CD8-positive, alpha-beta T cell (primary cell): ENCODE measurements at regions of chr2 and their contacts with region 1.

Region 1: DNA sequence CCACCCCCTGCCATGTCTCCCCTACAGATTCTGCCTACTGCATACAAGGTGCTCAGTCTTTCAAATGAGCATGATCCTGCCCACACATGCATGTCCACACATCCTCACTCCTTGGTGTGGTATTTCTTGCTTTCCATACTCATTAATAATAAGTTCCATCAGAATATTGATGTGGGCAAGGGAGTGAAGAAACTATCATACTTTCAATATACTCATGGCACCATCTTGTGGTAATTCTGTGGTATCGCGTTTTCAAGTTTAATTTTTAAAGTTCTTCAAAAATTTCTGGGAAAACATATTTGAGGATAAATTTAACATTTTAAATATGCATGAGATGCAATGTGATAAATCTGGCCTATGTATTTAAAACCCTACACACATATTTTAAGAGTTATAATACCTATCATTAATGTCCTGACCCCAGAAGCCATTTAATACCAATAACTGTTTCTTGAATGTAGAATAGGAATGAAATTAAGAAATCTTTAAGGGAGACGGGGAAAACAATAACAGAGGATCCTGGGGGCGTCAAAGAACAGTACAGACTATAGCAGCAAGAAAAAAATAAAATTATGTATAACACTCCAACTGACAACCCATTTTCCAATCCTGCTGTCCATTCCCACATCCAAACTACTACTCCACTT is 110.1 kb downstream of the ZNF385B start:
- DNase-seq: peak in 1 of 9 experiments; percentile 7
- ATAC-seq: no peak
- H3K4me3 ChIP-seq: no peak overlapping the region
- H3K4me3 Mint-ChIP-seq: no peak overlapping the region
- H3K27ac ChIP-seq: no peak overlapping the region
- H3K27ac Mint-ChIP-seq: no peak overlapping the region
- H3K4me1 ChIP-seq: no peaks in the 10 kb centered on the region
- H3K4me1 Mint-ChIP-seq: no peaks in the 10 kb centered on the region
- H3K27me3 ChIP-seq: no peaks in the 10 kb centered on the region
- H3K27me3 Mint-ChIP-seq: no peaks in the 10 kb centered on the region
- CTCF ChIP-seq: peak; percentile 42

Region 2: DNA sequence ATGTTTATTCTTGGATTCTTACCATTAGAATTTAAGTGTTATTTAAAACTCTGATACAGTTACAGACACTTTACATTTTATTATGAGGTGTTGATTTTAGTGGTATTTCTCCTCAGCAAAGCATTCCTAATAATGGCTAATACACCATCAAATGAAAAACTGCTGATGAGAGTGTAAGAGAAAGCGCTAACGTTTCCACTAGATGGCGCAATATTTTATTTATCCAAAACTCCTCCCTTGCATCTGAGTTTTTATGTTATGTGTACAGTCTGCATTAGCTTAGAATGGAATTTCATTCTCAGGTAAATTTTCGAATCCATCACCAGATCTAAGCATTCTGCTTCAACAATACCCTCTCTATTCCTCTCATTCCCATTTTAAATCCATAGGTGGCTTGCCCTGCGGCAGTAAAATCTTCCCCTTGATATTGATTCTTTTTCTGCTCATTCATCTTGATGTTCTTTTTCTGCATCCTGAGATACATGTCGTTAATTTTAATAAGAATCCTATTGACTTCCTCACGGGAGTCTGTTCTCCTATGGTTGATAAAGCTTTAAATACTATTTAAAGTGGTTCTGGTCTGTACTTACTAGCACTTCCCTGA is 1354.2 kb before region 1 on chr2:
- CTCF ChIA-PET with region 1: no interaction called
- POLR2A ChIA-PET with region 1: no interaction called
- intact Hi-C with region 1: loop called in 1 of 2 experiments (anchors 5 kb)
- DNase-seq: peak in 2 of 9 experiments; percentile 55 to 67
- ATAC-seq: peak; percentile 62
- H3K4me3 ChIP-seq: no peak overlapping the region
- H3K4me3 Mint-ChIP-seq: no peak overlapping the region
- H3K27ac ChIP-seq: no peak overlapping the region
- H3K27ac Mint-ChIP-seq: no peak overlapping the region
- H3K4me1 ChIP-seq: no peaks in the 10 kb centered on the region
- H3K4me1 Mint-ChIP-seq: no peaks in the 10 kb centered on the region
- H3K27me3 ChIP-seq: no peaks in the 10 kb centered on the region
- H3K27me3 Mint-ChIP-seq: peaks cover 7% of the 10 kb centered on the region
- CTCF ChIP-seq: peak; percentile 84

Region 3: GRCh38 chr2:178761759-178762371 is 989.4 kb before region 1 on chr2:
- CTCF ChIA-PET with region 1: interaction called, 3 read pairs
- POLR2A ChIA-PET with region 1: no interaction called
- intact Hi-C with region 1: loop called (anchors 2 to 5 kb)
- DNase-seq: peak in 4 of 9 experiments; percentile 16 to 57 (median 33)
- ATAC-seq: peak; percentile 29
- H3K4me3 ChIP-seq: no peak overlapping the region
- H3K4me3 Mint-ChIP-seq: no peak overlapping the region
- H3K27ac ChIP-seq: no peak overlapping the region
- H3K27ac Mint-ChIP-seq: no peak overlapping the region
- H3K4me1 ChIP-seq: no peaks in the 10 kb centered on the region
- H3K4me1 Mint-ChIP-seq: no peaks in the 10 kb centered on the region
- H3K27me3 ChIP-seq: no peaks in the 10 kb centered on the region
- H3K27me3 Mint-ChIP-seq: no peaks in the 10 kb centered on the region
- CTCF ChIP-seq: peak; percentile 90

Region 4: DNA sequence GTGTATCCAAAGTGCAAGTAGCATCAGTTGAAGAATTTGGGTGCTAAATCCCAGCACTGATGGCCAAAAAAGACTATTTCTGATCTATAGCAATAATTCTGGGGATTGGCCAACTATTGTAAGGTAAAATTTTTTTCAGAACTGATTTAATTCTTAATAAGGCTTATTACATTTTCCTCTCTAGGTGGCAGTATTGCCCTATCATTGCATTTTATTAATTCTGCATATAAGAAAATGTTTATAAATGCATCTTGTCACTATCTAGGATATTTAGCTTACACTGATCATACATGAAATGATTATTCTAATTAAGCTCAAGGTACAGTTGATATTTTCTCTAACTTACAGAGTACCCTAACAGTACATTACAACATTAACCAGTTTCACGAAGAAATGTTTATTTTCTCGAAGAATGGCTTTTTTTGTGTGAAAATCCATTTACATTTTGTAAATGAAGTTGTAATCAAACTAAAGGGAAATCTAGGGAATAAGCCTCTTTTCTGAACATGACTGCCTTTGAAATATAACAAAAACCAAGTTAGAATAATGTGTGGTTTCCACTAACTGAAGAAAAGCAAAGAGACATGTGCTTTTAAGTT is 955.1 kb before region 1 on chr2:
- CTCF ChIA-PET with region 1: no interaction called
- POLR2A ChIA-PET with region 1: no interaction called
- intact Hi-C with region 1: loop called in 1 of 2 experiments (anchors 10 kb)
- DNase-seq: peak in 2 of 9 experiments; percentile 17 to 47
- ATAC-seq: no peak
- H3K4me3 ChIP-seq: no peak overlapping the region
- H3K4me3 Mint-ChIP-seq: no peak overlapping the region
- H3K27ac ChIP-seq: no peak overlapping the region
- H3K27ac Mint-ChIP-seq: no peak overlapping the region
- H3K4me1 ChIP-seq: no peaks in the 10 kb centered on the region
- H3K4me1 Mint-ChIP-seq: no peaks in the 10 kb centered on the region
- H3K27me3 ChIP-seq: no peaks in the 10 kb centered on the region
- H3K27me3 Mint-ChIP-seq: no peaks in the 10 kb centered on the region
- CTCF ChIP-seq: peak; percentile 70

Region 5: GRCh38 chr2:179218848-179219594 is 532.3 kb before region 1 on chr2:
- CTCF ChIA-PET with region 1: no interaction called
- POLR2A ChIA-PET with region 1: no interaction called
- intact Hi-C with region 1: loop called (anchors 5 to 10 kb)
- DNase-seq: peak; percentile 2 to 74 (median 42)
- ATAC-seq: peak; percentile 36
- H3K4me3 ChIP-seq: no peak overlapping the region
- H3K4me3 Mint-ChIP-seq: no peak overlapping the region
- H3K27ac ChIP-seq: no peak overlapping the region
- H3K27ac Mint-ChIP-seq: no peak overlapping the region
- H3K4me1 ChIP-seq: no peaks in the 10 kb centered on the region
- H3K4me1 Mint-ChIP-seq: no peaks in the 10 kb centered on the region
- H3K27me3 ChIP-seq: no peaks in the 10 kb centered on the region
- H3K27me3 Mint-ChIP-seq: no peaks in the 10 kb centered on the region
- CTCF ChIP-seq: peak; percentile 82

Region 6: DNA sequence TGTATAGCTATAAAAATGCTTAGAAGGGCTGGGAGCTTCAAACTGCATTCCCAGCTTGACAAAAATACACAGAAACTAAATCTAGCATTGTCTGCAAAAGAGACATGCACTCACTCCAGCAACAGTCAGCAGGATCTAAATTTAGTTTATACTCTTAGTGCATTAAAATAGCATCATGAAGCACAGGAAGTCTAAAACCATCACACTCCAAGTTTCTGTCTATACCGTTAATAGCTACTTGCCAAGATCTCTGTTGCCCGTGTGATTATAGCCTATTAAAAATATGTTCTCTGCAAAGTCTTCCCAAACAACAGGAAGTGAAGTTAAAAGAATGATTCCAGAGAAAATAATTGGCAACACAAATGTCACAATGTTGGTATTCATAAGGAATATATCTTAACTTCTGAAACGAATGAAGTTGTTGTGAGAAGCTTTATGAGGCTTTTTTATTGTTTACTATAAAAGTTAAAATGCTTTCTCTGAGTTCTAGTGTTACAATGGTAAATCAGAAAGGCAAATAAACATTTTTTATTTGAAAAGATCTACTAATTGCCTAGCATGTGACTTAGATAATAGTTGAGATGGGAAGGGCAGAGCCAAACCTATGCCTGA is 74.1 kb before region 1 on chr2:
- CTCF ChIA-PET with region 1: no interaction called
- POLR2A ChIA-PET with region 1: no interaction called
- intact Hi-C with region 1: no loop called
- DNase-seq: no peak
- ATAC-seq: no peak
- H3K4me3 ChIP-seq: no peak overlapping the region
- H3K4me3 Mint-ChIP-seq: no peak overlapping the region
- H3K27ac ChIP-seq: no peak overlapping the region
- H3K27ac Mint-ChIP-seq: no peak overlapping the region
- H3K4me1 ChIP-seq: no peaks in the 10 kb centered on the region
- H3K4me1 Mint-ChIP-seq: no peaks in the 10 kb centered on the region
- H3K27me3 ChIP-seq: no peaks in the 10 kb centered on the region
- H3K27me3 Mint-ChIP-seq: no peaks in the 10 kb centered on the region
- CTCF ChIP-seq: no peak

Region 7: GRCh38 chr2:180169474-180169873 is 418.2 kb after region 1 on chr2:
- CTCF ChIA-PET with region 1: no interaction called
- POLR2A ChIA-PET with region 1: no interaction called
- intact Hi-C with region 1: no loop called
- DNase-seq: no peak
- ATAC-seq: no peak
- H3K4me3 ChIP-seq: no peak overlapping the region
- H3K4me3 Mint-ChIP-seq: no peak overlapping the region
- H3K27ac ChIP-seq: no peak overlapping the region
- H3K27ac Mint-ChIP-seq: no peak overlapping the region
- H3K4me1 ChIP-seq: no peaks in the 10 kb centered on the region
- H3K4me1 Mint-ChIP-seq: no peaks in the 10 kb centered on the region
- H3K27me3 ChIP-seq: no peaks in the 10 kb centered on the region
- H3K27me3 Mint-ChIP-seq: peaks cover 11% of the 10 kb centered on the region
- CTCF ChIP-seq: no peak